ENCODE measurements at regions of chr3 and their contacts with region 1.

Region 1: GRCh38 chr3:195442573-195443390 is at the start of gene ACAP2:
- DNase-seq: peak; percentile 99
- H3K4me3 ChIP-seq: peak within 1 kb of the TSS; percentile 77 to 95 (median 82)
- H3K27ac ChIP-seq: peak within 1 kb of the TSS; percentile 71
- H3K4me1 ChIP-seq: peaks cover 19% of the 10 kb centered on the region
- H3K27me3 ChIP-seq: no peaks in the 10 kb centered on the region
- CTCF ChIP-seq: no peak
- total RNA-seq, gene ACAP2: 46.6 to 59.2 TPM

Region 2: DNA sequence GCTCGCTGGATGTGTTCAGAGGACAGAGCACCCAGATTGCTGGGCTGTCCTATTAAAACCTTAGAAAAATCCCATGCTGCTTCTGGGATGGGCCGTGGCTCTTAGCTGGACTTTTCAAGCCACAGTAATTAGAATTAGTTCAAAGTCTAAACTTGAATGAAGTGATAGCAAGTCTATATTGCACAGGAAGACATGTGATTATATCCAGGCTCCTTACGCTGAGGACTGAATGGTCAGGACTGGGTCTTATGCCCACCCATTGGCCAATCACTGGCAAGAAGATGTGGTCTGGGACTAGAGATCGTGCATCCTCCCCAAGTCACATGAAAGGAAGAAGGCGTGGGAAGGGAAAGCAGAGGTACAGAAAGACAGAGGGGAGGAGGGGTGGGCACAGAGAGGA is 529.5 kb before region 1 on chr3:
- CTCF ChIA-PET with region 1: no interaction called
- dilution Hi-C with region 1: no loop called
- in situ Hi-C with region 1: no loop called
- intact Hi-C with region 1: no loop called
- DNase-seq: no peak
- H3K4me3 ChIP-seq: no peak overlapping the region
- H3K27ac ChIP-seq: no peak overlapping the region
- H3K4me1 ChIP-seq: no peaks in the 10 kb centered on the region
- H3K27me3 ChIP-seq: peaks cover 5% of the 10 kb centered on the region
- CTCF ChIP-seq: no peak

Region 3: GRCh38 chr3:195297446-195297845 is 145.3 kb before region 1 on chr3:
- CTCF ChIA-PET with region 1: no interaction called
- dilution Hi-C with region 1: no loop called
- in situ Hi-C with region 1: no loop called
- intact Hi-C with region 1: loop called (anchors 5 kb)
- DNase-seq: no peak
- H3K4me3 ChIP-seq: no peak overlapping the region
- H3K27ac ChIP-seq: no peak overlapping the region
- H3K4me1 ChIP-seq: no peaks in the 10 kb centered on the region
- H3K27me3 ChIP-seq: no peaks in the 10 kb centered on the region
- CTCF ChIP-seq: no peak

Region 4: GRCh38 chr3:195319060-195319459 is 123.7 kb before region 1 on chr3:
- CTCF ChIA-PET with region 1: no interaction called
- dilution Hi-C with region 1: no loop called
- in situ Hi-C with region 1: no loop called
- intact Hi-C with region 1: no loop called
- DNase-seq: no peak
- H3K4me3 ChIP-seq: no peak overlapping the region
- H3K27ac ChIP-seq: no peak overlapping the region
- H3K4me1 ChIP-seq: no peaks in the 10 kb centered on the region
- H3K27me3 ChIP-seq: no peaks in the 10 kb centered on the region
- CTCF ChIP-seq: no peak

Region 5: GRCh38 chr3:195352895-195353488 is 89.8 kb before region 1 on chr3:
- CTCF ChIA-PET with region 1: no interaction called
- dilution Hi-C with region 1: no loop called
- in situ Hi-C with region 1: no loop called
- intact Hi-C with region 1: loop called (anchors 1 kb)
- DNase-seq: peak; percentile 70
- H3K4me3 ChIP-seq: no peak overlapping the region
- H3K27ac ChIP-seq: peak overlapping the region; percentile 52
- H3K4me1 ChIP-seq: peaks cover 13% of the 10 kb centered on the region
- H3K27me3 ChIP-seq: no peaks in the 10 kb centered on the region
- CTCF ChIP-seq: no peak

Region 6: DNA sequence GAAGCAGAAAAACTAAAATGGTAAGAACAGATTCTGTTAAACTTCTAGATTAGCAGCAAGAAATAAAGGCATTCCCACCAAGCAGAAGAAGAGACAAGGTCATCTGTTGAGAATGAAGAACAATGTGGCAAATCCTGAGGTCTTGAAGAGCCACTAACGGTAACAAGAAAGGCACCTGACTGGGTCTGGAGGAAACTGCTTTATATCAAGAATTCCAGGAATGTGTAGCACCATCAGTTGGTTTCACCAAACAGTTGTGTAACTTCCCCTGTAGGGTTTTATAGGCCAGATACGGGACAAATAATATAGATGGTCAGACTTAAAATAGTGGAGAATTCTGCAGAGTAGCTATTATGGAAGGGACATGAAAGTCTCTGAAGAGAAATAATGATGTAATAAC is 57.3 kb before region 1 on chr3:
- CTCF ChIA-PET with region 1: no interaction called
- dilution Hi-C with region 1: no loop called
- in situ Hi-C with region 1: no loop called
- intact Hi-C with region 1: loop called (anchors 5 kb)
- DNase-seq: peak; percentile 3
- H3K4me3 ChIP-seq: no peak overlapping the region
- H3K27ac ChIP-seq: no peak overlapping the region
- H3K4me1 ChIP-seq: peaks cover 9% of the 10 kb centered on the region
- H3K27me3 ChIP-seq: no peaks in the 10 kb centered on the region
- CTCF ChIP-seq: no peak

Region 7: DNA sequence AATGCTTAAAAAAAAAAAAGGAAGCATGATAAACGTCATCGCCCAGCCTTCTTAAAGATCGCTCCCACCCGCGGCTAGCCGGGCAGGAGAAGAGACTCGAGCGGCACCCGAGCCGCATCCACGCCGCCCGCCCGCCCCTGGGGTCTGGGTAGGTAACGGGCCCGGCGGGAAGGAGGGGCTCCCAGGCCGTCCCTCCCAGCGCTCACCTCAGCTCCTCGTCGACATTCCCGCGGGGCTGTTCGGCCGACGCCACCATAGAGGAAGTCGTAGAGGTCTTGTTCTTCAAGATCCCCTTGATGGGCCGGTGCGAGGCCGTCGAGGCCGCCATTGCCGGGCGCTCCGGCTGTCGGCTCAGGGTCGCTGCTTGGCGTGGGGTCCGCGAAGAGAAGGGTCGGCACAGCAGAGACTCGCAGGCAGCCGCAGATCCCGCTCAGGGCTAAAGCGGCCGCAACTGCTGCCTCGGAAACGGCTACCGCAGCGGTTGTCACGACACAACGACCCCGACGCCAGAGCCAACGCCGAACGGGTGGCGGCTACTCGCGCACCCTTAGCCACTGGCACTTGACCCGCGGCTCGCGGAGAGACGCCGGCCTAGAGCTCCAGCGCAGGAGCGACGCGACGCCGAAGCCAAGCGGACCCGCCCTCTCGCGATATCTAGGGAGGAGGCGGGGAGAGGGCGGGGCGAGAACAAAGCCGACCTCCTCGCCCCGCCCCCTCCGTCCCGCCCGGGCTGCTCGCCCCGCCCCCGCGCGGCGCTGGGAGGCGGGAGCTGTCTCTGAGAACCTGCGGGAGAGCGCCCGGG is 100.1 kb after region 1 on chr3 and contains the start of gene PPP1R2:
- CTCF ChIA-PET with region 1: no interaction called
- dilution Hi-C with region 1: no loop called
- in situ Hi-C with region 1: no loop called
- intact Hi-C with region 1: loop called (anchors 1 kb)
- DNase-seq: peak; percentile 86
- H3K4me3 ChIP-seq: peak within 1 kb of the TSS; percentile 76 to 93 (median 88)
- H3K27ac ChIP-seq: peak within 1 kb of the TSS; percentile 74
- H3K4me1 ChIP-seq: peaks cover 26% of the 10 kb centered on the region
- H3K27me3 ChIP-seq: no peaks in the 10 kb centered on the region
- CTCF ChIP-seq: no peak
- total RNA-seq, gene PPP1R2: 45.5 to 129 TPM